ENCODE measurements at regions of chr5 and their contacts with region 1.

Region 1: GRCh38 chr5:58898538-58898937 is 315.7 kb downstream of the RAB3C start:
- DNase-seq: no peak
- ATAC-seq: no peak
- H3K4me3 ChIP-seq: no peak overlapping the region
- H3K4me3 Mint-ChIP-seq: no peak overlapping the region
- H3K27ac ChIP-seq: no peak overlapping the region
- H3K27ac Mint-ChIP-seq: no peak overlapping the region
- H3K4me1 ChIP-seq: no peaks in the 10 kb centered on the region
- H3K4me1 Mint-ChIP-seq: no peaks in the 10 kb centered on the region
- H3K27me3 ChIP-seq: peaks cover 0 to 2% (median under 1%) of the 10 kb centered on the region in 4 experiments
- H3K27me3 Mint-ChIP-seq: peaks cover 8% of the 10 kb centered on the region
- CTCF ChIP-seq: no peak

Region 2: GRCh38 chr5:59007460-59008063 is 109.0 kb after region 1 on chr5:
- CTCF ChIA-PET with region 1: interaction called, 18 read pairs
- POLR2A ChIA-PET with region 1: no interaction called
- intact Hi-C with region 1: no loop called
- DNase-seq: no peak
- ATAC-seq: no peak
- H3K4me3 ChIP-seq: no peak overlapping the region
- H3K4me3 Mint-ChIP-seq: no peak overlapping the region
- H3K27ac ChIP-seq: no peak overlapping the region
- H3K27ac Mint-ChIP-seq: no peak overlapping the region
- H3K4me1 ChIP-seq: no peaks in the 10 kb centered on the region
- H3K4me1 Mint-ChIP-seq: no peaks in the 10 kb centered on the region
- H3K27me3 ChIP-seq: no peaks in the 10 kb centered on the region
- H3K27me3 Mint-ChIP-seq: no peaks in the 10 kb centered on the region
- CTCF ChIP-seq: peak; percentile 34

Measured in B cell (primary cell).